Activated CD4-positive, alpha-beta memory T cell treated with anti-CD3 and anti-CD28 coated beads for 36 hours (primary cell): ENCODE measurements at regions of chr1 and their contacts with region 1.

Region 1: DNA sequence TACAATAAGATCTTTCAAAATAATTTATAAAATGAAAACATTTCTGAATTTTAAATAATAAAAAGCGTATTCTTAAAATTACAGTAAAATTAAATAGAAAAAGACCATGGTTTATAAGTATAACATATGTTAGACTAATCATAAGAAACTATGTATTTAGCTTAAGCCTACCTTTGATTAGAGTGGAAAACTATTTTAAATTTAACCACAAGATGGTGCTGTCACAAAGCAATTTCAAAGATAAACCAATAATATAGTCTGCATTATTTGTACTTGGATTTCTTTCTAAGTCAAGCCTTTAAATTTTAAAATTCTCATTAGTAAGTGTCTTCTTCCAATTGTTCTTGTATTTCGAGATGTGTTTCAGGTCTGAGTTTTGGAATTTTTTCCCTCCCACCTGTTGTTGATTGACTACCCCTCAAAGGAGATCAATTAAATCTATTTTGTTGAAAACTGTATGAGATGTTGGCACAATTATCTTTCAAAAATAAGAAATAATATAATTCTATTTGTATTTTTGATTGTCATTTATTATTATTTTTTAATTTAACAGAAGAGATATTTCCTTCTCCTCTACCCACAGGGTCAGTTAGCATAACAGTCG is 459.8 kb downstream of the KCNT2 start:
- DNase-seq: no peak
- H3K4me3 Mint-ChIP-seq: no peak overlapping the region
- H3K27ac Mint-ChIP-seq: no peak overlapping the region
- H3K4me1 Mint-ChIP-seq: no peaks in the 10 kb centered on the region
- H3K27me3 Mint-ChIP-seq: peaks cover 3% of the 10 kb centered on the region

Region 2: GRCh38 chr1:196372896-196373536 is 224.5 kb after region 1 on chr1:
- CTCF ChIA-PET with region 1: no interaction called
- POLR2A ChIA-PET with region 1: no interaction called
- intact Hi-C with region 1: loop called (anchors 1 kb)
- DNase-seq: no peak
- H3K4me3 Mint-ChIP-seq: no peak overlapping the region
- H3K27ac Mint-ChIP-seq: no peak overlapping the region
- H3K4me1 Mint-ChIP-seq: no peaks in the 10 kb centered on the region
- H3K27me3 Mint-ChIP-seq: no peaks in the 10 kb centered on the region

Region 3: GRCh38 chr1:196425513-196425912 is 277.0 kb after region 1 on chr1:
- CTCF ChIA-PET with region 1: no interaction called
- POLR2A ChIA-PET with region 1: no interaction called
- intact Hi-C with region 1: no loop called
- DNase-seq: no peak
- H3K4me3 Mint-ChIP-seq: no peak overlapping the region
- H3K27ac Mint-ChIP-seq: no peak overlapping the region
- H3K4me1 Mint-ChIP-seq: no peaks in the 10 kb centered on the region
- H3K27me3 Mint-ChIP-seq: no peaks in the 10 kb centered on the region

Region 4: GRCh38 chr1:196660852-196661251 is 512.4 kb after region 1 on chr1:
- CTCF ChIA-PET with region 1: interaction called, 36 read pairs
- POLR2A ChIA-PET with region 1: no interaction called
- intact Hi-C with region 1: loop called (anchors 1 kb)
- DNase-seq: no peak
- H3K4me3 Mint-ChIP-seq: no peak overlapping the region
- H3K27ac Mint-ChIP-seq: no peak overlapping the region
- H3K4me1 Mint-ChIP-seq: peaks cover 6% of the 10 kb centered on the region
- H3K27me3 Mint-ChIP-seq: no peaks in the 10 kb centered on the region